ENCODE measurements at regions of chr18 and their contacts with region 1.

Region 1: DNA sequence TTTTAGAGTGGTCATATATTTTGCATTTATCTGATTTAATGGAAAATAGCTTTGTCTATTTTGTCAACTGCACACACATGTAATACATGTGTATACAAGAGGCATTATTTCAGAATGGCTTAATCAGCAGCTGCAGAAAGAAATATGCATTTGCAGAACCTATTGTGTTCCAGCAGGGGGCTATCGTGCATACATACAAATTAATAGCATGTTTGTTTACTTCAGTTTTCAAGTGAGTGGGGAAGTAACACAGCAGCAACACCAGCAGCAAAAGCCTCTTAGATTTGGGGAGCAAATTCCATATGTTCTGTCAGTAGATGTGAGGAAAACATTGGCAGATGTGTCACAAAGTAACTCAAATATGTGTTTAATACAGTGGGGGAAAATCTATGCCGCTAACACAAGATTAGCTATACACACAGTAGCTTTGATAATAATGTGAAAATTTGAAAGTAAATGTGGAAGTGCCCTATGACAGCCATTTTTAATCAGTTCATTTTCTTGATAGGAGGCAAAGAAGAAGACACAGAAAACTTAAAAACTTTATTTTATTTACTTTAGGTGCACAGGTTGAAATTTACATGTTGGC is 218.1 kb downstream of the WDR7 start:
- DNase-seq: peak; percentile 13
- CTCF ChIP-seq: peak; percentile 74

Region 2: GRCh38 chr18:56851774-56852173 is 17.5 kb before region 1 on chr18:
- CTCF ChIA-PET with region 1: interaction called, 19 read pairs
- POLR2A ChIA-PET with region 1: no interaction called
- DNase-seq: peak; percentile 26
- CTCF ChIP-seq: no peak

Region 3: GRCh38 chr18:57029761-57030160 is 160.5 kb after region 1 on chr18:
- CTCF ChIA-PET with region 1: no interaction called
- POLR2A ChIA-PET with region 1: no interaction called
- DNase-seq: no peak
- CTCF ChIP-seq: no peak

Measured in GM10248 (cell line).